ENCODE measurements at regions of chr9 and their contacts with region 1.

Region 1: GRCh38 chr9:36572515-36573418 is at the start of gene MELK:
- H3K4me3 Mint-ChIP-seq: peak within 1 kb of the TSS; percentile 88
- H3K27ac Mint-ChIP-seq: peak within 1 kb of the TSS; percentile 84
- H3K4me1 Mint-ChIP-seq: peaks cover 21% of the 10 kb centered on the region
- H3K27me3 Mint-ChIP-seq: peaks cover 2% of the 10 kb centered on the region

Region 2: GRCh38 chr9:36487482-36488388 is 85.0 kb before region 1 on chr9:
- intact Hi-C with region 1: loop called (anchors 5 kb)
- H3K4me3 Mint-ChIP-seq: peak overlapping the region; percentile 84
- H3K27ac Mint-ChIP-seq: peak overlapping the region; percentile 97
- H3K4me1 Mint-ChIP-seq: peaks cover 47% of the 10 kb centered on the region
- H3K27me3 Mint-ChIP-seq: peaks cover 6% of the 10 kb centered on the region

Region 3: DNA sequence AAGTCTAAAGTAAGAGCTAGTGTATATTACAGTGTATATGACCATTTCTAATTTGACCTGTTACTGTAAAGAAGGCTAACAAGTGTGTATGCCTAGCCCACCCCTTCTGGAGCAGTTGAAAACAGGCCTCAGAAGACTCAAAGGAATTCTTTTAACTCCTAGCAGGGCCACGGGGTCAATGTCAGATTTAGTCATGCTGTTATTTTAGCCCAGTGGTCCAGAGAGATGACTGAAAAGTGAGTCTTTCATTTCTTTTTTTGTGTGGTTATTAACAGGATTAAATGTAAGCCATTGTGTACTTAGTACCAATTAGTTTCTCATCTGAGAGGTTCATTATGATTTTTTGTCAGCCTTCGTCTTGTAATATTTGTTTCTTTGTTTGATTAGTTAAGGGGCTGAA is 572.0 kb after region 1 on chr9:
- intact Hi-C with region 1: loop called (anchors 10 kb)
- H3K4me3 Mint-ChIP-seq: no peak overlapping the region
- H3K27ac Mint-ChIP-seq: no peak overlapping the region
- H3K4me1 Mint-ChIP-seq: peaks cover 30% of the 10 kb centered on the region
- H3K27me3 Mint-ChIP-seq: no peaks in the 10 kb centered on the region

Measured in dendritic cell treated with granulocyte-macrophage colony-stimulating factor and Interleukin-4, amounts not matched to agents 40 ng/mL and 50 ng/mL, for 4 days (primary cell).